ENCODE measurements at regions of chr2 and their contacts with region 1.

Region 1: DNA sequence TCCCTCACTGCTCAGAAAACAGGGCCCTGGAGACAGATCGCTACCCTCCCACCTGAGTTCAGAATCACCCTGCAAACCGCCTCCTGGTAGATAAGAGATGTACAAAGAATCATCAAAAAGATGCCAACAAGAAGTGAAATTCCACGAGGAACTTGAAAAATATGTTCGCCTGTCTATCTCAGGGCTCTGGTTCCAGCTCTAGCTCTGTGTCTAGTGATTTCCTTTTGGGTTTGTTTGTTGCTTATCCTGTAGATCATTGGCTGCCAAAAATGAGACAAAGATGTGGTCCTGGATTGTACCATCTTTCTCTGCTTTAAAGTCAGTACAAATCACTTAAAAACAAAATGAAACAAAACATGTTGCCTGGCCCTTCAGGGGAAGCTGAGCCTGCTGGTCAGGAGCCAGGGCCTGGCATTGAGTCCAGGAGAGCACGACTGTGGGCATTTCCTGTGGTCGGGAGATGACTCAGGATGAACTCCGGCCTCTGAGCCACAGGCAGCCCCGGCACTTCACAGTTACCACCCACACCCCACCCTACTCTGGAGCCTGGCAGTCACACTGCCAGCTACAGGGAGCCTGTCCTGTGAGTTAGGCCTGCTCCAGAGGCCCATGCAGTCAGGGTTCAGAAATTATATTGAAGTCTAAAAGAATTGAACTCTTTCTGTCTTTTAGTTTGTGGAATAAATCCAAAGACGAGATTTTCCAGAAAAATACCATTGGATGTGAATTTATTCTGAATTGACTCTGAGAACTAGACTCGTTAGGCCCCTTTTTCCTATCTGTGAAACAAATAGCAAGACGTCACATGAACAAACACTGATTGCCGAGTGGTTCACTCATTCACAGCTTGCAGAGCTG is 8.0 kb upstream of the ITGB6 start:
- DNase-seq: peak in 5 of 10 donors; percentile 19 to 66 (median 42)
- H3K4me3 ChIP-seq: no peak overlapping the region
- H3K27ac ChIP-seq: peak overlapping the region in 14 of 59 donors; percentile 2 to 73 (median 28)
- H3K27me3 ChIP-seq: no peaks in the 10 kb centered on the region
- CTCF ChIP-seq: no peak

Region 2: DNA sequence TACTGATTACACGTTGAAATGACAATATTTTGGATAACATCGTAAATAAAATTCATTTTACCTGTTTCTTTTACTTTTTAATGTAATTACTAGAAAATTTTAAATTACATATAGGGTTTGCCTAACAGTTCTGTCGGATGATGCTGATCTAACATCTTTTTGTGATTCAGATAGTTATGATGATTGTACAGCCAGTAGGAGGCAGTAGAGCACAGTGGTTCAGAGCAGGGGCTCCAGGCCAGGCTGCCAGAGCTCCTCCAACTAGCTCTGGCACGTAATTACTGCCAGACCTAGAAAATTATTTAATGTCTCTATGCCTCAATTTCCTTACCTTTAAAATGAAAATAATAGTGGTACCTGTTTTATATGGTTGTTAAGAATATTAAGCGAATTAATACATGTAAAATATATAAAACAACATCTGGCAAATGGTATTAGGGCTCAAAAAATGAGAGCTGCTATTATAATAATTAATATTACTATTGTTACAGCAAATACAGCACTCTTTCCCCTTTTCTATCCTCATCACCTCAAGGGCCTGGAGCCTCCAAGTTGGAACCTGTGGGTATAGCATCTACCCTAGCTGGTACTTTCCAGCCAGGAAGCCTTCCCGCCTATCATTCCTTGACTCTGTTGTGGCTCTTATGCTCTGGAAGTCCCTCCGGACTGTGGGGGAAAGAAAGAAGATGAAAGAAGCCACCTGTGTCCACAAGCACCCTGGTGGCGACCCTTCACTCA is 97.9 kb before region 1 on chr2:
- intact Hi-C with region 1: loop called in 1 of 2 experiments (anchors 2 kb)
- DNase-seq: peak in 7 of 10 donors; percentile 7 to 58 (median 42)
- H3K4me3 ChIP-seq: no peak overlapping the region
- H3K27ac ChIP-seq: no peak overlapping the region
- H3K27me3 ChIP-seq: peaks cover 0 to 11% (median 0%) of the 10 kb centered on the region in 45 donors
- CTCF ChIP-seq: peak; percentile 53 to 92 (median 76)

Region 3: DNA sequence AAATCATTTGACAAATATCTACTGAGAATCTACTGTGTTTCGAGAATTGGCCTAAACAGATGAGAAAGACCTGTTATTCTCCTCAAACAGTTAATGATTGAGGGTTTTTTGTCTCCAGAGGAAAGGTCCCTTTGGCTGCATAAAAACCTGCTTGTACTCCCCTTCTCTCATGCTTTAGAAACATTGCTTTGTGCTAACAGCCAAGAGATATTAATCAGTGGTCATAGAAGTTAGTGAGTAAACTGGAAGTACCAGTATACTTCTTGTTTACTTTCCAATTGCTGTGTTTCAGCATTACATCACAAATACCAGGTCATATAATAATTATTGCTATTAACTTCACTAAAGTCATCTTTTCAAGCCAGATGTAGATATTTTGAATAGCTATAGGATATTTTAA is 42.0 kb before region 1 on chr2:
- intact Hi-C with region 1: no loop called
- DNase-seq: no peak
- H3K4me3 ChIP-seq: no peak overlapping the region
- H3K27ac ChIP-seq: no peak overlapping the region
- H3K27me3 ChIP-seq: no peaks in the 10 kb centered on the region
- CTCF ChIP-seq: no peak